AG04450 (cell line): ENCODE measurements at regions of chr1 and their contacts with region 1.

Region 1: GRCh38 chr1:93345633-93346420 is at the start of gene DR1:
- DNase-seq: peak; percentile 90
- H3K4me3 ChIP-seq: peak within 1 kb of the TSS; percentile 84
- H3K27ac ChIP-seq: peak within 1 kb of the TSS; percentile 96
- H3K27me3 ChIP-seq: no peaks in the 10 kb centered on the region
- CTCF ChIP-seq: no peak
- polyA plus RNA-seq, gene DR1: 36.1 and 44.9 TPM in 2 replicates

Region 2: GRCh38 chr1:93078986-93079654 is 266.7 kb before region 1 on chr1 and contains the start of gene MTF2:
- CTCF ChIA-PET with region 1: no interaction called
- POLR2A ChIA-PET with region 1: interaction called, 14 read pairs
- DNase-seq: peak; percentile 97
- H3K4me3 ChIP-seq: peak within 1 kb of the TSS; percentile 93
- H3K27ac ChIP-seq: peak within 1 kb of the TSS; percentile 89
- H3K27me3 ChIP-seq: no peaks in the 10 kb centered on the region
- CTCF ChIP-seq: no peak
- polyA plus RNA-seq, gene MTF2: 15.8 and 23.9 TPM in 2 replicates

Region 3: DNA sequence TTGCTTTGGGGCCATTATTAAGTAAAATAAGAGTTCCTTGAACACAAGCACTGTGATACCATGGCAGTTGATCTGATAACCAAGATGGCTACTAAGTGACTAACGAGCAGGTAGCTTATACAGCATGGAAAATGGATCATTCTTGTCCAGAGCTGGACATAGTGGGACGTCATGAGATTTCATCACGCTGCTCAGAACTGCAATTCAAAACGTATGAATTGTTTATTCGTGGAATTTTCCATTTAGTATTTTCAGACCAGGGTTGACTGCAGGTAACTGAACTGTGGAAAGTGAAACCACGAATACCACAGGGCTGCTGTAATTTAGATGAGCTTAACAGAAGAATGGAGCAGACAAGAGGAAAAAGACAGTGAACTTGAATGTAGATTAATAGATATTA is 126.4 kb before region 1 on chr1:
- CTCF ChIA-PET with region 1: no interaction called
- POLR2A ChIA-PET with region 1: no interaction called
- DNase-seq: no peak
- H3K4me3 ChIP-seq: no peak overlapping the region
- H3K27ac ChIP-seq: no peak overlapping the region
- H3K27me3 ChIP-seq: no peaks in the 10 kb centered on the region
- CTCF ChIP-seq: no peak

Region 4: GRCh38 chr1:93328809-93329760 is 16.7 kb before region 1 on chr1:
- CTCF ChIA-PET with region 1: interaction called, 5 read pairs
- POLR2A ChIA-PET with region 1: interaction called, 16 read pairs
- DNase-seq: peak; percentile 30
- H3K4me3 ChIP-seq: no peak overlapping the region
- H3K27ac ChIP-seq: peak overlapping the region; percentile 49
- H3K27me3 ChIP-seq: no peaks in the 10 kb centered on the region
- CTCF ChIP-seq: no peak